ENCODE measurements at regions of chr14 and their contacts with region 1.

Region 1: GRCh38 chr14:105045710-105046326 is 19.4 kb downstream of the GPR132 start:
- DNase-seq: peak; percentile 96
- ATAC-seq: peak; percentile 96

Region 2: DNA sequence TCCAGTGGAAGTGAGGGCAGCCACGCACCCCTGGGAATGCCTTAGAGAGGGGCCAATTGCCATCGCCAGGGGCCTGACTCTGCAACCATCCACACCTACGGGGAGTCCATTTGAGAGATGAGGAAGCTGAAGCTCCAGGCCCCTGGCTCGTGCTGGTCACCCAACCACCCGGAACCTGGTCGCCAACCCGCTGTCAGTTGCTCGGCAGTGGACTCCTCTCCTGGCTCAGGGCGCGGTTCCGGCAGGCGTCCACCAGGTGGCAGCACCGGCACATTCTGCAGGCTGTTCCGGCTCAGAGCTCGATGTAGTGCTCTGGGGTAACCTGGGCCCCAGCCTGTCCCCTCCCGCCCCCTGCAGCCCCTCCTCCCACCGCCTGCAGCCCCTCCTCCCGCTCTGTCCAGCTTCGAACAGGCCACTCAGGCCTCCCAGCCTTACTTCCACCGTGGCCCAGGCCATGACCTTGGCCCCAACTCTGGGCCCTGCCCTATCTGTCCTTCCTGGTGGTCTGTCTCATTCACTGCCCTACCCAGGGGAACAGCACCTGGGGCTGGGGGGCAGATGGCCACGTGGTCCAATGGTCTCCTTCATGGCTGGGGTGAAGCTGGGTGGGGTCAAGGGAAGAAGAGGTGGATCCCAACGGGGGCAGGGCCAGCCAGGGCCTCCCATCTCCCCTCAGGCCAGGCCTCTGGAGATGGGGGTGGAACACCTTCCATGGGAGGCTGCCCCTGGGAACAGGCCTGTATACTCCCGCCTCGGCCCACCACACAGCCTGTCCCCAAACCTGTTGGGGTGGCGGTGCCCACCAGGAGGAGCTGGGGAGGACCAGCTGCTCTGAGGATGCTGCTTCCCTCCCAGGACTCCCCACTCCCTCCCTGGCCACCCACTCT is 277.1 kb before region 1 on chr14:
- intact Hi-C with region 1: loop called (anchors 5 kb)
- DNase-seq: peak; percentile 95
- ATAC-seq: peak; percentile 91

Region 3: GRCh38 chr14:104895786-104896661 is 149.8 kb before region 1 on chr14:
- intact Hi-C with region 1: loop called (anchors 5 kb)
- DNase-seq: peak; percentile 62
- ATAC-seq: no peak

Region 4: DNA sequence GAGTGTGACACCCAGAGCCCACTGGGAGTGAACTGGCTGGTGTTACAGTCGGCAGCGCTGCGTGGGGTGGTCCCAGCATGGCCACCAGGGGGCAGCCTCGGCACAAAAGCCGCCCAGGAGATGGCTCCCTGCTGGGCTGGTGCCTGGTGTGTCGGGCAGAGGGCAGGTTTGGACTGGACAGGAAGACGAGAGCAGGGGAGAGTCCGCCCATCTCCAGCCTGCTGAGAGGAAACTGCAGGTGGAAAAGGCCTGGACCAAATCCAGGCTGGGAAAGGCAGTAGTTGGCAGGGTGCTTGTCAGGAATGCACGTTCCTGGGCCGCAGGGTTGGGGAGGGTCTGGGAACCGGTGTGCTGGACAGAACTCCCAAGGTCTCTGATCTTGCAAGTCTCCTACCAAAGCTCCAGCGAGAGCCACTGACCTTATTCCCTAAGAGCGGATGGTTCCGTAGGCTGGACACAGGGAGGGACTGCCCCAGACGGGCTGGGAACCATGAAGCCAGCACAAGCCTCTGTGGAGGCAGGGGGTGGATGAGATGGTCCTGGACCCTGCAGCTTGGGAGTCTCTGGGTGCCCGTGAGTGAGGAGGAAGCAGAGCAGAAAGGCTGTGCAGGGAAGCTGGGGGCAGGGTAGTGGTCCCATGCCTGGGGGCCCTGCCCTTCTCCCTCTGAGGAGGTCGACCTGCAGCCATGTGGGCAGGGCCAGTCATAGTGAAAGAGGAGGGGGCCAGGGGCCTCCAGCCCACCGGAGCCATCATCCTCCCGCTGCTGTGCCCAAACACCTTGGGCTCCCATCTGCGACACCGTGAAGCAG is 69.4 kb before region 1 on chr14:
- intact Hi-C with region 1: loop called (anchors 1 kb)
- DNase-seq: peak; percentile 93
- ATAC-seq: peak; percentile 74